HepG2 (cell line): ENCODE measurements at regions of chr20 and their contacts with region 1.

Region 1: GRCh38 chr20:35463455-35464300 is 8.3 kb downstream of the CEP250 start:
- DNase-seq: peak; percentile 84
- ATAC-seq: peak; percentile 79
- H3K4me3 ChIP-seq: no peak overlapping the region
- H3K27ac ChIP-seq: peak overlapping the region; percentile 14
- H3K4me1 ChIP-seq: peaks cover 42% of the 10 kb centered on the region
- H3K27me3 ChIP-seq: no peaks in the 10 kb centered on the region
- CTCF ChIP-seq: peak; percentile 95
- EP300 ChIP-seq: no peak
- POLR2A ChIP-seq: no peak
- RAD21 ChIP-seq: peak; percentile 92

Region 2: DNA sequence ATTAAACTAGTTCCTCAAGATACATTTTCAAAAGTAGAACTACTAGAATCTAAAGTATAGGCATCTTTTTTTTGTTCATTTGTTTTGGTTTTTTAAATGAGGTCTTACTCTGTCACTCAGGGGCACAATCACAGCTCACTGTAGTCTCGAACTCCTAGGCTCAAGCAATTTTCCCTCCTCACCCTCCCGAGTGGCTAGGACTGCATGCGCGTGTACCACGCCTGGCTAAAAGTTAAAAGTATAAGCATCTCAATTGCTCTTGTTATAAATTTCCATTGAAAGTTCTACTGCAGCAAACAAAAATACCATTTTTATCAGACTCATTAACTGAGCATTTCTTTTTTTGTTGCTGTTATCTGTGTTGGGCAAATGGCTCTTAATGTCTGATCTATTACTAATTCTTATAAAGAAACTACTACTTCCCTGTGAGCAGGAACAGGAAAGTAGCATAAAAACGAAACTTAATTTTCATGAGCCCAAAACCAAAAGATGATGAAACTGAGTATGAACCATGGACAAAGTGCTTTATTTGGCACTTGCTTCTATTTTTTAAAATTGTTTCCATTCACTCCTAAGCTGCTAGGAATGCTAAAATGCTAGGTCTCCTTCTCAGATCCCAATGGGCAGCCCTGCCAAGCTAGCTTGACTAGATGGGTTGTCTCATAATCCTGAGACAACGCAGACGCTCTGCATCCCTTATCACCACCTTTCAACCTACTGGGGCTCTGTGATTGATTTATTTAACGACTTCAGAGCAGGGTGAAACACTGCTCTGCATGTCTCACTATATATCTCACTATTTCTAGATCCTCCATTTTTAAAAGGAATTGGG is 408.0 kb before region 1 on chr20:
- CTCF ChIA-PET with region 1: no interaction called
- POLR2A ChIA-PET with region 1: no interaction called
- in situ Hi-C with region 1: no loop called
- intact Hi-C with region 1: no loop called
- DNase-seq: no peak
- ATAC-seq: no peak
- H3K4me3 ChIP-seq: no peak overlapping the region
- H3K27ac ChIP-seq: no peak overlapping the region
- H3K4me1 ChIP-seq: peaks cover 24% of the 10 kb centered on the region
- H3K27me3 ChIP-seq: no peaks in the 10 kb centered on the region
- CTCF ChIP-seq: no peak
- EP300 ChIP-seq: no peak
- POLR2A ChIP-seq: no peak
- RAD21 ChIP-seq: no peak

Region 3: GRCh38 chr20:35421322-35421721 is 42.4 kb before region 1 on chr20:
- CTCF ChIA-PET with region 1: no interaction called
- POLR2A ChIA-PET with region 1: no interaction called
- in situ Hi-C with region 1: no loop called
- intact Hi-C with region 1: no loop called
- DNase-seq: no peak
- ATAC-seq: no peak
- H3K4me3 ChIP-seq: no peak overlapping the region
- H3K27ac ChIP-seq: no peak overlapping the region
- H3K4me1 ChIP-seq: no peaks in the 10 kb centered on the region
- H3K27me3 ChIP-seq: peaks cover 2 to 5% of the 10 kb centered on the region in 2 experiments; a peak in 2 of 5 replicates
- CTCF ChIP-seq: no peak
- EP300 ChIP-seq: no peak
- POLR2A ChIP-seq: no peak
- RAD21 ChIP-seq: no peak

Region 4: GRCh38 chr20:35478804-35479472 is 15.3 kb after region 1 on chr20:
- CTCF ChIA-PET with region 1: interaction called, 4 read pairs
- POLR2A ChIA-PET with region 1: interaction called, 46 read pairs
- in situ Hi-C with region 1: no loop called
- intact Hi-C with region 1: loop called (anchors 2 kb)
- DNase-seq: peak; percentile 77
- ATAC-seq: peak; percentile 84
- H3K4me3 ChIP-seq: peak overlapping the region in 1 of 3 experiments; percentile 6; a peak in 1 of 6 replicates
- H3K27ac ChIP-seq: peak overlapping the region; percentile 57
- H3K4me1 ChIP-seq: peaks cover 37% of the 10 kb centered on the region
- H3K27me3 ChIP-seq: no peaks in the 10 kb centered on the region
- CTCF ChIP-seq: peak; percentile 87
- EP300 ChIP-seq: no peak
- POLR2A ChIP-seq: no peak
- RAD21 ChIP-seq: peak; percentile 50

Region 5: DNA sequence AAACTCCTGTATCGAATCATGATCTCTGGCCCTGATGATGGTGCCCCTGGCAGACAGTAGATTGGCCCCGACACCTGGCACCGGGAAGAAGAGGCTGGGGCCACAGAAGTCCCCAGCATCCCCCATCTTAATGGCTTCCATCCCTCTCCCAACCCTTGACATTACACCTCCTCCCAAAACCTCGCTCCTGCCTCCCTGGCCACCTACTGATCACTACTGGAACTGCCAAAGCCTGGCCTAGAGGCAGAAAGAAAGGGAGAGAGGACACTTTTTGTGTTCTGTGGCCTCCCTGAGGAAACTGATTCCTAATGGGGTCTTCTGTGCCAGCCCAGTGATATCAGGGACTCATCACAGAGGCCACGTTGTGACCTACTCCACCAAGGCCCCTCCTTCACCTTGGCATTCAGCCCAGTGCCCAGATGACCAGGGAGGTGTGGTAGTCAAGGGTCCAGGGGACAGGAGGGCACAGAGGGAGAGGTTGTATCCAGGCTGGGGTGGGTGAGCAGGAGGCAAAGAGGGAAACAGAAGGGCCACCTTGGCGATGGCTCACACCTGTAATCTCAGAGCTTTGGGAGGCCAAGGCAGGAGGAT is 59.7 kb after region 1 on chr20:
- CTCF ChIA-PET with region 1: interaction called, 30 read pairs
- POLR2A ChIA-PET with region 1: no interaction called
- in situ Hi-C with region 1: no loop called
- intact Hi-C with region 1: loop called (anchors 1 kb)
- DNase-seq: peak; percentile 47
- ATAC-seq: peak; percentile 85
- H3K4me3 ChIP-seq: no peak overlapping the region
- H3K27ac ChIP-seq: no peak overlapping the region
- H3K4me1 ChIP-seq: peaks cover 28% of the 10 kb centered on the region
- H3K27me3 ChIP-seq: no peaks in the 10 kb centered on the region; a peak in 1 of 5 replicates
- CTCF ChIP-seq: peak; percentile 76
- EP300 ChIP-seq: no peak
- POLR2A ChIP-seq: no peak
- RAD21 ChIP-seq: peak; percentile 49

Region 6: DNA sequence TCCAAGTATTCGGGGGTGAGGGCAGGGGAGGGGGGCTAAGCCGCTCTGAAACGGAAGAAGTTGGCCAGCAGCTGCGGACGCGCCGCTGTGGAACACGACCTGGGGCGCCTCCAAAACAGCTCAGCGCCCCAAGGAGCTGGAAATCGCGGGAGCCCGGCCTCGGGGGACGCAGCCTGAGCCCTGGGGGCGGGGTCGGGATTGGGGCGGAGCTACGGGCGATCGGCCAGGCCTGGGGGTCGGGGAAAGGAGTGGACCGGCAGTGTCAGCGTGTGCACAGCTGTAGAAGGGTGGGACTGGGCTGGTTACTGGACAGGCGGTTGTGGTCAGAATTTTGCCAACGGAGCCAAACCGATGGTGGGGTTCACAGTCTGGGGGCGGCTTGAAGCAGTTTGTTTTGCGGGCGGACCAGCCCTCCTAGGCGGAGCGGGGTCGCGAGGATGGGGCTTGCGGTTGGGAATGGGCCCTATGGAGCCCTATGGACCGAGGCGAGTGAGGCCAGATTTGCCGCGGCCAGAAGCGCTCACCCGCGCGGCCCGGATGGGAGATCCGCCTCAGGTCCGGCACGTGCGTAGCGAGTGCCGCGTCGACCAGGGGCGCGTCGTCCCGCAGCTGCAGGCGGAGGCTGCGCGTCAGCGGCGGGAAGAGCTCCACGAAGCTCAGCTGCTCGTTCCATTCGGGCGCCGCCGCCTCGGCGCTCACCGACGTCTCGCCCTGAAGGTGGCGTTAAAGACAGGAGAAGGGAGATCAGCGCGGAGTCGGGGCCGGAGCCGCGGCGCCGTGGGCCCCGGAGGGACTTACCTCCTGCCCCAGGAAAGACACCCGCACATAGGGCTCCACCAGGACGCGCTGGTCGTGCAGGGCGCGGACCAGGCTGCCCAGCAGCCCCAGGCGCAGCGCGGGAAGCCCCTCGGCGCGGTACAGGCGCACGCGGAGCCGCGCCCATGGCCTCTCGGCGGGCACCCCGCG is 137.6 kb after region 1 on chr20:
- CTCF ChIA-PET with region 1: interaction called, 8 read pairs
- POLR2A ChIA-PET with region 1: no interaction called
- in situ Hi-C with region 1: loop called (anchors 5 kb)
- intact Hi-C with region 1: no loop called
- DNase-seq: peak; percentile 35
- ATAC-seq: peak; percentile 41
- H3K4me3 ChIP-seq: peak overlapping the region in 1 of 3 experiments; percentile 36; a peak in 1 of 6 replicates
- H3K27ac ChIP-seq: no peak overlapping the region
- H3K4me1 ChIP-seq: peaks cover 26% of the 10 kb centered on the region
- H3K27me3 ChIP-seq: peaks cover 3 to 23% of the 10 kb centered on the region in 2 experiments; a peak in 4 of 5 replicates
- CTCF ChIP-seq: peak; percentile 81
- EP300 ChIP-seq: no peak
- POLR2A ChIP-seq: no peak
- RAD21 ChIP-seq: peak; percentile 60

Region 7: GRCh38 chr20:35699127-35699975 is 235.7 kb after region 1 on chr20 and contains the starts of genes NFS1 and ROMO1:
- CTCF ChIA-PET with region 1: no interaction called
- POLR2A ChIA-PET with region 1: interaction called, 9 read pairs
- in situ Hi-C with region 1: no loop called
- intact Hi-C with region 1: loop called (anchors 10 kb)
- DNase-seq: peak; percentile 94
- ATAC-seq: peak; percentile 84
- H3K4me3 ChIP-seq: peak within 1 kb of the TSS; percentile 90 to 98 (median 96)
- H3K27ac ChIP-seq: peak within 1 kb of the TSS; percentile 88
- H3K4me1 ChIP-seq: peaks cover 49% of the 10 kb centered on the region
- H3K27me3 ChIP-seq: no peaks in the 10 kb centered on the region; a peak in 1 of 5 replicates
- CTCF ChIP-seq: peak; percentile 94
- EP300 ChIP-seq: peak; percentile 19 to 54; a peak in 3 of 4 replicates
- POLR2A ChIP-seq: peak; percentile 93 to 96
- RAD21 ChIP-seq: peak; percentile 96
- total RNA-seq, gene NFS1: 88.1 and 94.4 TPM in 2 replicates
- total RNA-seq, gene ROMO1: 636 and 726 TPM in 2 replicates